ENCODE measurements at regions of chr7 and their contacts with region 1.

Region 1: GRCh38 chr7:66054063-66054462 is 21.6 kb upstream of the ASL start:
- DNase-seq: no peak
- ATAC-seq: no peak
- H3K4me3 Mint-ChIP-seq: no peak overlapping the region
- H3K27ac Mint-ChIP-seq: no peak overlapping the region
- H3K4me1 Mint-ChIP-seq: peaks cover 4% of the 10 kb centered on the region
- H3K27me3 Mint-ChIP-seq: no peaks in the 10 kb centered on the region

Region 2: GRCh38 chr7:66281678-66282590 is 227.9 kb after region 1 on chr7:
- CTCF ChIA-PET with region 1: no interaction called
- POLR2A ChIA-PET with region 1: no interaction called
- intact Hi-C with region 1: no loop called
- DNase-seq: no peak
- ATAC-seq: no peak
- H3K4me3 Mint-ChIP-seq: no peak overlapping the region
- H3K27ac Mint-ChIP-seq: no peak overlapping the region
- H3K4me1 Mint-ChIP-seq: no peaks in the 10 kb centered on the region
- H3K27me3 Mint-ChIP-seq: no peaks in the 10 kb centered on the region

Region 3: DNA sequence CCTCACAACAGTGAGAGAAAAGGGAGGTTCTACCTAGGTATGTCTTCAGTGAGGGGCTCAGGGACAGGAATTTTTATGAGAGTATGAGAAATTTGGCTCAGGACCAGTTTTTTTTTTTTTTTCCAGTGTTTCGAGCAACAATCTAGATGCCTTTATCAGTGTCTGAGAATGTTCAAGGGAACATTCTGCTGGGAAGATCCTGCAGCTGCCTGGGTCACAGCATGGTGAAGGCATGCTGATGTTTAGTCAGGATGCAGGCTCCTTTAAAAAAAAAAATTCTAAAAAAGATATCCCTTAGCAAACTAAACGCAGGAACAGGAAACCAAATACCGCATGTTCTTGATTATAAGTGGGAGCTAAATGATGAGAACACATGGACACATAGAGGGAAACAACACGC is 910.3 kb after region 1 on chr7:
- CTCF ChIA-PET with region 1: no interaction called
- POLR2A ChIA-PET with region 1: interaction called, 13 read pairs
- intact Hi-C with region 1: no loop called
- DNase-seq: no peak
- ATAC-seq: no peak
- H3K4me3 Mint-ChIP-seq: no peak overlapping the region
- H3K27ac Mint-ChIP-seq: no peak overlapping the region
- H3K4me1 Mint-ChIP-seq: no peaks in the 10 kb centered on the region
- H3K27me3 Mint-ChIP-seq: no peaks in the 10 kb centered on the region

Measured in activated CD4-positive, alpha-beta T cell treated with anti-CD3 and anti-CD28 coated beads for 36 hours (primary cell).